BJ (cell line): ENCODE measurements at regions of chr5 and their contacts with region 1.

Region 1: GRCh38 chr5:142769741-142770631 is at the start of gene ARHGAP26:
- DNase-seq: peak; percentile 67
- H3K4me3 ChIP-seq: peak within 1 kb of the TSS; percentile 65
- H3K27me3 ChIP-seq: 0 out of 2 replicates have a peak, but pooled peaks cover 7% of the 10 kb centered on the region
- CTCF ChIP-seq: peak; percentile 47
- polyA plus RNA-seq, gene ARHGAP26: 4.8 TPM in 2 replicates

Region 2: DNA sequence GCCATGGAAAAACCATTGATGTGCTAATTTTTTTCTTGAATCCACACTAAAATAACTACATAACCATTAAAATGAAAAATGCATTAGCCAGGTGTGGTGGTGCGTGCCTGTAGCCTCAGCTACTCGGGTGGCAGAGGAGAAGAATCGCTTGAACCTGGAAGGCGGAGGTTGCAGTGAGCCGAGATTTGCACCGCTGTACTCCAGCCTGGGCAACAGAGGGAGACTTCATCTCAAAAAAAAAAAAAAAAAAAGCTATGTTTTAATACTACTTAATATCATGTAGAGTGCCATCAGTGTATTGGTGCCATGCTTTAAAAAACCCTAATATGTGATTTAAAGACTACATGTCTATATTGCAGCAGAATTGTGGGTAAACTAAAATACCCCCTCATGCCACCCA is 602.5 kb before region 1 on chr5:
- CTCF ChIA-PET with region 1: no interaction called
- POLR2A ChIA-PET with region 1: no interaction called
- DNase-seq: no peak
- H3K4me3 ChIP-seq: no peak overlapping the region
- H3K27me3 ChIP-seq: no peaks in the 10 kb centered on the region
- CTCF ChIP-seq: no peak

Region 3: GRCh38 chr5:142748568-142749249 is 21.3 kb before region 1 on chr5:
- CTCF ChIA-PET with region 1: interaction called, 23 read pairs
- POLR2A ChIA-PET with region 1: no interaction called
- DNase-seq: no peak
- H3K4me3 ChIP-seq: no peak overlapping the region
- H3K27me3 ChIP-seq: no peaks in the 10 kb centered on the region
- CTCF ChIP-seq: 0 out of 2 replicates have a peak, but pooled peaks have one; percentile 18

Region 4: GRCh38 chr5:142783601-142784341 is 13.8 kb after region 1 on chr5:
- CTCF ChIA-PET with region 1: interaction called, 12 read pairs
- POLR2A ChIA-PET with region 1: no interaction called
- DNase-seq: no peak
- H3K4me3 ChIP-seq: no peak overlapping the region
- H3K27me3 ChIP-seq: no peaks in the 10 kb centered on the region
- CTCF ChIP-seq: no peak

Region 5: DNA sequence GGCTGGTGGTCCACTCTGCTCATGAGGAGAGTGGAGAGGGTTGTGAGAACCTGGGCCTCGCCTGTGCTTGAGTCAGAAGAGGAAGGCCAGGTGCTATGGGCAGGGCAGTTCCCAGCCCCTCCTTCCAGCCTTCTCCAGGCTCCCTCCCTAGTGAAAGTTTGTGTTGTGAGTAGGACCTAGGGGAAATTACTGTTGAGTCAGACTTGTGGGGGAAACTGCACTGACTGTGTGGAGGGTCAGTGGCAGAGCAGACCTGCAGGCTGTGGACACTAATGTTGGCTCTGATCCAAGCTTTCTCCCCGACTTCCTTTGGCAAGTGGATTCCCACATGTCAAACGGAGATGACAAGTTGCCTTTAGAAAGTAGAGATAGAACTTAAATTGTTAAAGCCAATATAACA is 102.8 kb after region 1 on chr5:
- CTCF ChIA-PET with region 1: interaction called, 12 read pairs
- POLR2A ChIA-PET with region 1: no interaction called
- DNase-seq: no peak
- H3K4me3 ChIP-seq: no peak overlapping the region
- H3K27me3 ChIP-seq: peaks cover 9% of the 10 kb centered on the region
- CTCF ChIP-seq: no peak